H1 (cell line): ENCODE measurements at regions of chr16 and their contacts with region 1.

Region 1: DNA sequence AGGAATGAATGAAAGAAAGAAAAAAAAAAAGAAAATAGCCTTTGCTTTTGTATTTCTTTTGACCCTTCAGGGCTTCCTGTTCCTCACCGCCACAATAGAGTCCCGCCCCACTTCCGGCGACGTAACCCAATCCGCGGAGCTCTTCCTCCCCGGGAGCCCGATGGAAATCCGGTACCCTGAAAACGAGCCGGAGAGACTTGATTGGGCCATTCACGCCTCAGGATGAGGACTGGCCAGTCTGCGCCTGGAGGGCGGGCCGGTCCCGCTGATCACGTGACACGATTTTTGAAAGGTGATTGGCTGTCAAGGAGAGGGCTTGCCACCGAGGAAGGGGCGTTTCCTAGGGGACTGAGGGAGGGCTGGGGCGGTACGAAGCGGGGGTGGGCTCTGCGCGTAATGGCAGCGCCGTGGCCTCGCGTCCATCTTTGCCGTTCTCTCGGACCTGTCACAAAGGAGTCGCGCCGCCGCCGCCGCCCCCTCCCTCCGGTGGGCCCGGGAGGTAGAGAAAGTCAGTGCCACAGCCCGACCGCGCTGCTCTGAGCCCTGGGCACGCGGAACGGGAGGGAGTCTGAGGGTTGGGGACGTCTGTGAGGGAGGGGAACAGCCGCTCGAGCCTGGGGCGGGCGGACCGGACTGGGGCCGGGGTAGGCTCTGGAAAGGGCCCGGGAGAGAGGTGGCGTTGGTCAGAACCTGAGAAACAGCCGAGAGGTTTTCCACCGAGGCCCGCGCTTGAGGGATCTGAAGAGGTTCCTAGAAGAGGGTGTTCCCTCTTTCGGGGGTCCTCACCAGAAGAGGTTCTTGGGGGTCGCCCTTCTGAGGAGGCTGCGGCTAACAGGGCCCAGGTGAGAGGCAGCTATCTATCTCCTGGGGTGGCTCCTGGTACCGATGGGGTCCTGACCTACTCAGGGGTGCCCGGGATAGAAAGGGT is at the starts of genes PSME3IP1 and RSPRY1:
- DNase-seq: peak; percentile 97 to 99
- H3K4me3 ChIP-seq: peak within 1 kb of the TSS; percentile 70 to 94 (median 90)
- H3K27ac ChIP-seq: peak within 1 kb of the TSS; percentile 78
- H3K4me1 ChIP-seq: peaks cover 2 to 7% (median 5%) of the 10 kb centered on the region in 4 experiments; a peak in 6 of 7 replicates
- H3K27me3 ChIP-seq: no peaks in the 10 kb centered on the region
- CTCF ChIP-seq: peak in 1 of 3 experiments; percentile 1; a peak in 1 of 4 replicates
- EP300 ChIP-seq: no peak
- POLR2A ChIP-seq: no peak; a peak in 1 of 3 replicates
- RAD21 ChIP-seq: no peak
- total RNA-seq, gene PSME3IP1: 93.1 and 95.1 TPM in 2 replicates
- total RNA-seq, gene RSPRY1: 32.5 and 34.2 TPM in 2 replicates

Region 2: DNA sequence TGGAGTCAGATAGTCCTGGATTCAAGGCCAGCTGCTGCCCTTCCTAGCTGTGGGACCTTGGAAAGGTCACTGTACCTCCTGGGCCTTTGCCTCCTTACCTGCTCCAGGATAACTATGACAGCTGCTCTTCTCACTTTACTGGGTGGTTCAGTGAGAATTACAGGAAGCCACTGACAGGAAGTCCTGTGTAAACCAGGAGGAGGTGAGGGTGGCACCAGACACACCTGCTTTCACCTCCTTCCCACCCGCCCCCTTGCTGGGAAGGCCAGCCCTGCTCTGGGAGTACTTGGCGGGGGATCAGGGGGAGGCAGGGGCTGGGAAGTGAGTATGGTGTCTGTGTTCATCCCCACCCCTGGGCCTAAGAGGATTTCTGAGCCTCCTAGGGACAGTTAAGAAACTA is 51.2 kb before region 1 on chr16:
- CTCF ChIA-PET with region 1: no interaction called
- POLR2A ChIA-PET with region 1: no interaction called
- DNase-seq: no peak
- H3K4me3 ChIP-seq: no peak overlapping the region
- H3K27ac ChIP-seq: no peak overlapping the region
- H3K4me1 ChIP-seq: peaks cover 0 to 5% (median 2%) of the 10 kb centered on the region in 4 experiments; a peak in 3 of 7 replicates
- H3K27me3 ChIP-seq: no peaks in the 10 kb centered on the region
- CTCF ChIP-seq: no peak
- EP300 ChIP-seq: no peak
- POLR2A ChIP-seq: no peak
- RAD21 ChIP-seq: no peak

Region 3: GRCh38 chr16:57147381-57148221 is 38.6 kb before region 1 on chr16:
- CTCF ChIA-PET with region 1: interaction called, 3 read pairs
- POLR2A ChIA-PET with region 1: interaction called, 11 read pairs
- DNase-seq: no peak
- H3K4me3 ChIP-seq: peak overlapping the region in 1 of 4 experiments; percentile 7; a peak in 3 of 8 replicates
- H3K27ac ChIP-seq: peak overlapping the region; percentile 42; the same call in 1 of the 2 replicates
- H3K4me1 ChIP-seq: peaks cover 13 to 33% (median 16%) of the 10 kb centered on the region in 4 experiments
- H3K27me3 ChIP-seq: no peaks in the 10 kb centered on the region
- CTCF ChIP-seq: no peak
- EP300 ChIP-seq: no peak
- POLR2A ChIP-seq: no peak
- RAD21 ChIP-seq: no peak

Region 4: GRCh38 chr16:57175896-57176295 is 10.3 kb before region 1 on chr16:
- CTCF ChIA-PET with region 1: no interaction called
- POLR2A ChIA-PET with region 1: interaction called, 10 read pairs
- DNase-seq: no peak
- H3K4me3 ChIP-seq: no peak overlapping the region
- H3K27ac ChIP-seq: no peak overlapping the region
- H3K4me1 ChIP-seq: no peaks in the 10 kb centered on the region; a peak in 1 of 7 replicates
- H3K27me3 ChIP-seq: no peaks in the 10 kb centered on the region
- CTCF ChIP-seq: no peak
- EP300 ChIP-seq: no peak
- POLR2A ChIP-seq: no peak
- RAD21 ChIP-seq: no peak